Dorsolateral prefrontal cortex (tissue), 120 donors: ENCODE measurements at regions of chr17 and their contacts with region 1.

Region 1: GRCh38 chr17:44095642-44096496 is 25.3 kb downstream of the G6PC3 start:
- DNase-seq: peak in 8 of 10 donors; percentile 36 to 79 (median 68)
- H3K4me3 ChIP-seq: peak overlapping the region in 43 of 59 donors; percentile 10 to 53 (median 29)
- H3K27ac ChIP-seq: peak overlapping the region; percentile 23 to 92 (median 82)
- H3K27me3 ChIP-seq: no peaks in the 10 kb centered on the region
- CTCF ChIP-seq: peak in 12 of 56 donors; percentile 8 to 41 (median 20)

Region 2: GRCh38 chr17:43791589-43791988 is 304.3 kb before region 1 on chr17:
- intact Hi-C with region 1: no loop called
- DNase-seq: no peak
- H3K4me3 ChIP-seq: peak overlapping the region in 2 of 59 donors; percentile 0 to 9
- H3K27ac ChIP-seq: no peak overlapping the region
- H3K27me3 ChIP-seq: no peaks in the 10 kb centered on the region
- CTCF ChIP-seq: no peak

Region 3: GRCh38 chr17:44167181-44167861 is 71.5 kb after region 1 on chr17:
- intact Hi-C with region 1: loop called in 1 of 2 experiments (anchors 5 kb)
- DNase-seq: no peak
- H3K4me3 ChIP-seq: no peak overlapping the region
- H3K27ac ChIP-seq: peak overlapping the region in 2 of 59 donors; percentile 25 to 31
- H3K27me3 ChIP-seq: no peaks in the 10 kb centered on the region
- CTCF ChIP-seq: no peak

Region 4: DNA sequence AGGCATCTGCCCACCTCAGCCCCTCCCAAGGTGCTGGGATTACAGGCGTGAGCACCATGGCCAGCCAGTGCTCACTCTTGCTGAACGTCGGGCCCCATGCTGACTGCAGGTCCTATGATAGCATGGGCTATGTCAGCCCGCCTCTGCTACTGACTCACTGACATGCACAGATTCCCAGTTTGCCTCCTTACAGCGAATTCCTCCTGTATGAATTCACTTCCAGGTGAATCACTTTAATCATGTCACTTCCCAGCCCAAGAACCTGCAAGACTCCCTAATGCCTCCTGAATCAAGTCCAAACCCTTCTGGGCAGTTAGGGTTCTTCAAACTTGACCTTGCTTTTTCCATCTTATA is 139.7 kb after region 1 on chr17:
- intact Hi-C with region 1: no loop called
- DNase-seq: no peak
- H3K4me3 ChIP-seq: no peak overlapping the region
- H3K27ac ChIP-seq: peak overlapping the region in 1 of 59 donors; percentile 15
- H3K27me3 ChIP-seq: no peaks in the 10 kb centered on the region
- CTCF ChIP-seq: no peak

Region 5: DNA sequence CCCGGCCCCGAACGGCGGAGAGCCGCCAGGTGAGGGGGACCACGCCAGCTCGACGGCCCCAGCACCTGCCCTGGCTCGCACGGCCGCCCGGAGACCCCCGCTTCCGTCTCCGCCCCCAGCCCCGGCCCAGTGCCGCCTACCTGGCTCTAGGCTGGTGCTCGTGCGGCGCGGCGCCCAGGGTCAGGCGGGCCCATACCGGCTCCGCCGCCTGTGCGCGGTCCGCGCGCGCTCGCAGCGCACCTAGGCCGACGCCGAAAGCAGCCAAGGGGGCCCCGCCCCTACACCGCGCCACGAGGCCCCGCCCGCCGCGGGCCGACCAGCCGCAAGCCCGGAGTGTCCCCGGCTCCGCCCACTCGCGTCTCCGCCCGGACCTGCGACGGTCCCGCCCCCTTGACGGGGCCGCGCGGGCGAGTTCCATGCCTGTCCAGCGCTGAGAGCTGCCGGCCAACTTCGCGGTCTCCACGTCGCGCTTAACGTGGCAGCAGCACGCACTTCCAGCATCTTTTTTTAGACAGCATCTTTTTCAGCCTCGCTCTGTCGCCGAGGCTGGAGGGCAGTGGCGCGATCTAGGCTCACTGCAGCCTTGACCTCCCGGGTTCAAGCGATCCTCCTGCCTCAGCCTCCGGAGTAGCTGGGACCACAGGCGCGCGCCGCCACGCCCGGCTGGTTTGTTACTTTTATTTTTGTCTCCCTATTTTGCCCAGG is 228.9 kb after region 1 on chr17 and contains the start of gene SLC25A39:
- intact Hi-C with region 1: no loop called
- DNase-seq: peak; percentile 88 to 98 (median 92)
- H3K4me3 ChIP-seq: peak within 1 kb of the TSS; percentile 68 to 100 (median 97)
- H3K27ac ChIP-seq: peak within 1 kb of the TSS; percentile 32 to 93 (median 83)
- H3K27me3 ChIP-seq: no peaks in the 10 kb centered on the region
- CTCF ChIP-seq: peak in 23 of 56 donors; percentile 7 to 56 (median 16)
- total RNA-seq, gene SLC25A39: 42.3 to 102 (median 61.2) TPM